ENCODE measurements at regions of chr11 and their contacts with region 1.

Region 1: GRCh38 chr11:111926505-111927391 is 8.0 kb downstream of the C11orf52 start:
- DNase-seq: peak; percentile 91 to 98 (median 96)
- ATAC-seq: peak; percentile 96
- H3K4me3 ChIP-seq: peak overlapping the region; percentile 61
- H3K4me3 Mint-ChIP-seq: peak overlapping the region; percentile 76 to 91 (median 87)
- H3K27ac ChIP-seq: peak overlapping the region; percentile 76
- H3K27ac Mint-ChIP-seq: peak overlapping the region; percentile 83 to 96 (median 92)
- H3K4me1 ChIP-seq: peaks cover 0 to 5% of the 10 kb centered on the region in 2 donors
- H3K4me1 Mint-ChIP-seq: peaks cover 0 to 19% (median 16%) of the 10 kb centered on the region in 7 donors
- H3K27me3 ChIP-seq: no peaks in the 10 kb centered on the region
- H3K27me3 Mint-ChIP-seq: peaks cover 0 to 5% (median 0%) of the 10 kb centered on the region in 5 donors

Region 2: GRCh38 chr11:111730871-111731591 is 195.7 kb before region 1 on chr11:
- CTCF ChIA-PET with region 1: no interaction called
- POLR2A ChIA-PET with region 1: no interaction called
- intact Hi-C with region 1: no loop called
- DNase-seq: no peak
- ATAC-seq: no peak
- H3K4me3 ChIP-seq: no peak overlapping the region
- H3K4me3 Mint-ChIP-seq: no peak overlapping the region
- H3K27ac ChIP-seq: no peak overlapping the region
- H3K27ac Mint-ChIP-seq: peak overlapping the region in 1 of 9 donors; percentile 31
- H3K4me1 ChIP-seq: no peaks in the 10 kb centered on the region
- H3K4me1 Mint-ChIP-seq: peaks cover 0 to 11% (median 8%) of the 10 kb centered on the region in 7 donors
- H3K27me3 ChIP-seq: no peaks in the 10 kb centered on the region
- H3K27me3 Mint-ChIP-seq: no peaks in the 10 kb centered on the region

Region 3: GRCh38 chr11:111938687-111939160 is 12.0 kb after region 1 on chr11:
- CTCF ChIA-PET with region 1: interaction called, 8 read pairs
- POLR2A ChIA-PET with region 1: interaction called, 6 read pairs
- intact Hi-C with region 1: loop called (anchors 1 kb)
- DNase-seq: peak in 6 of 9 donors; percentile 18 to 38 (median 27)
- ATAC-seq: peak; percentile 73
- H3K4me3 ChIP-seq: no peak overlapping the region
- H3K4me3 Mint-ChIP-seq: peak overlapping the region; percentile 59 to 95 (median 78)
- H3K27ac ChIP-seq: peak overlapping the region; percentile 49
- H3K27ac Mint-ChIP-seq: peak overlapping the region; percentile 67 to 96 (median 84)
- H3K4me1 ChIP-seq: peaks cover 4 to 29% of the 10 kb centered on the region in 2 donors
- H3K4me1 Mint-ChIP-seq: peaks cover 16 to 48% (median 32%) of the 10 kb centered on the region in 7 donors
- H3K27me3 ChIP-seq: no peaks in the 10 kb centered on the region
- H3K27me3 Mint-ChIP-seq: no peaks in the 10 kb centered on the region

Region 4: DNA sequence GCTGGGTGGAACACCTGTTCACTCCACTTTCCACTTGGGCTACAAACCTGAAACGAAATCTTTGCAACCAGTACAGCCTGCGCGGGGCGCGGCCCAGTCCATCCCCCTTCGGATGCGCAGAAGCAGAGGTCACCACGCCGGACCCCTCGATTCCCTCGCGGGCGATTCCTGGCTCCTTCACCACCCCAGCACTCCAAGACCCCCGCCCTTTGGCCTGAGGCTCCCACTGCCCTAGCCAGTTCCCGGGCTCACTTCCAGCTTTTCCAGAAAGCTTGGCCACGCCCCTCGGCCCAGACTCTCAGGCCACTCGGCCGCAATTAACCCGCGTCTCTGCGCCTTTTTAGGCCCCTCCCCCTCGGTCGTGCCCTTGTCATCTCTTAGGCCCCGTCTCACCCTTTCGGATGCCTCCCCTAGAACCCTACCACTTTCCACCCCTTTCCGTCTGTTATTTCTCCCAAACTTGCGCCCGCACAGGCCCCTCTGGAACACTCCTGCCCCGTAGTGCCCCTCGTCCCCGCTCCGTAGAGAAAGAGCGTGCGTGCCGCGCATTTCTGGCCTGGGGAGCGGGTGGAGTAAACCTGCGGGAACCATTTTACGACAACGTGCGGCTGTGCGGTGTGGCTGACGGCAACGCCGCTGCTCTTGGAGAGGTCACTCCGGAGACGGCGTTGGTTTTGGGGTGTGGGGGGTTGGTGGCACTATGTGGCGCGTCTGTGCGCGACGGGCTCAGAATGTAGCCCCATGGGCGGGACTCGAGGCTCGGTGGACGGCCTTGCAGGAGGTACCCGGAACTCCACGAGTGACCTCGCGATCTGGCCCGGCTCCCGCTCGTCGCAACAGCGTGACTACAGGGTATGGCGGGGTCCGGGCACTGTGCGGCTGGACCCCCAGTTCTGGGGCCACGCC is 98.3 kb after region 1 on chr11 and contains the start of gene DLAT:
- CTCF ChIA-PET with region 1: no interaction called
- POLR2A ChIA-PET with region 1: interaction called, 9 read pairs
- intact Hi-C with region 1: loop called (anchors 1 kb)
- DNase-seq: peak; percentile 66 to 87 (median 85)
- ATAC-seq: peak; percentile 95
- H3K4me3 ChIP-seq: peak within 1 kb of the TSS; percentile 100
- H3K4me3 Mint-ChIP-seq: peak within 1 kb of the TSS; percentile 97 to 100 (median 99)
- H3K27ac ChIP-seq: peak within 1 kb of the TSS; percentile 93
- H3K27ac Mint-ChIP-seq: peak within 1 kb of the TSS; percentile 96 to 100 (median 98)
- H3K4me1 ChIP-seq: peaks cover 0 to 7% of the 10 kb centered on the region in 2 donors
- H3K4me1 Mint-ChIP-seq: peaks cover 14 to 39% (median 30%) of the 10 kb centered on the region in 7 donors
- H3K27me3 ChIP-seq: no peaks in the 10 kb centered on the region
- H3K27me3 Mint-ChIP-seq: no peaks in the 10 kb centered on the region
- total RNA-seq, gene DLAT: 13.1 to 31.0 (median 17.8) TPM

Region 5: GRCh38 chr11:112086422-112087191 is 159.9 kb after region 1 on chr11 and contains the starts of genes SDHD and TIMM8B:
- CTCF ChIA-PET with region 1: interaction called, 3 read pairs
- POLR2A ChIA-PET with region 1: interaction called, 15 read pairs
- intact Hi-C with region 1: loop called (anchors 1 kb)
- DNase-seq: peak; percentile 90 to 98 (median 97)
- ATAC-seq: peak; percentile 94
- H3K4me3 ChIP-seq: peak within 1 kb of the TSS; percentile 99
- H3K4me3 Mint-ChIP-seq: peak within 1 kb of the TSS; percentile 90 to 100 (median 98)
- H3K27ac ChIP-seq: peak within 1 kb of the TSS; percentile 76
- H3K27ac Mint-ChIP-seq: peak within 1 kb of the TSS; percentile 92 to 99 (median 96)
- H3K4me1 ChIP-seq: peaks cover 21 to 23% of the 10 kb centered on the region in 2 donors
- H3K4me1 Mint-ChIP-seq: peaks cover 44 to 69% (median 62%) of the 10 kb centered on the region in 7 donors
- H3K27me3 ChIP-seq: no peaks in the 10 kb centered on the region
- H3K27me3 Mint-ChIP-seq: peaks cover 0 to 2% (median 0%) of the 10 kb centered on the region in 5 donors
- total RNA-seq, gene SDHD: 39.6 to 84.4 (median 65.8) TPM
- total RNA-seq, gene TIMM8B: 15.5 to 61.1 (median 24.3) TPM

Measured in naive thymus-derived CD4-positive, alpha-beta T cell (primary cell).